ENCODE measurements at regions of chr1 and their contacts with region 1.

Region 1: DNA sequence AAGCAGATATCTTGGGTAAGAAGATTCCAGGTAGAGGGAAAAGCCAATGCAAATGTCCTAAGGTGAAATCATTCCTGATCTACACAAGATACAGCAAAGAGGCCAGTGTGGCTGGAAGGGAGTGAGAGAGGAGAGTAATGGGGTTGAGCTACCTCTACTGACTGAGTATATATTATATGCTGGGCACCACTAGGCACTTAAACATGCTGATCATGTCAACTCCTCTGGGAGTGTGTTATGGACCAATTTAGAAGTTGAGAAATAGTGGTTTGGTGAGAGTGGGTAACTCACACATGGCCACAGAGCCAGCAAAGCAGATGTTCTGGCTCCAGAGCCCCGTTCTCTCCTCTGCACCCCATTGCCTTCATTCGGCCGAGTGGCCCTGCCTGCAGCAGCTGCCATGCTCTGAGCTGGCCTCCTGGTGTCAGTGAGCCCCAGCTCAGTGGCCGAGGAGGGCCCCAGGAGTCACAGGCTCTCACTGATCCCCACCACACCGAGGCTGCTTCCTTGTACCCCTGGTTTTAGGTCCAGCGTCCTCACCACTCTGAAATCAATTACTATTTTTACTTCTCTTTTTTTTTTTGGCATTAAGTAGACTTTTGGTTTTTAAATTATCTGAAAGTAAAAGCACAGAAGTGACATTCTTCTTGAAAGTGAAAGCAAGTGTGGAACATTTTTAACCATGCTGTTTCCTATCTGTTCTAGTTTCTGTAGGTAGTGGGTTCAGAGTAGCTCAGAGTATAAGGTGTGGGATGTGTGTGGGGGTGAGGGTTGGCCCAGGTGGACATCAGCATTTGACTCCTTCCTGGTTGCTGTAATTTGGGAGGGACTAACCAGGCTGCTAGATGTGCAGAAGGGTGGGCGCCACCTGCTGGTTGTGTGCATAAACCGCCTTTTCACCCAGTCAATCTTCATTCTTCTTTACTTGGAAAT is 45.8 kb upstream of the CRNN start:
- DNase-seq: peak; percentile 29 to 88 (median 63)
- ATAC-seq: peak; percentile 53 to 76 (median 64)
- H3K4me3 ChIP-seq: peak overlapping the region in 1 of 2 donors; percentile 12
- H3K4me3 Mint-ChIP-seq: peak overlapping the region; percentile 43 to 74 (median 62)
- H3K27ac ChIP-seq: peak overlapping the region; percentile 70
- H3K27ac Mint-ChIP-seq: peak overlapping the region; percentile 83 to 94
- H3K4me1 ChIP-seq: peaks cover 4 to 14% of the 10 kb centered on the region in 2 experiments
- H3K4me1 Mint-ChIP-seq: peaks cover 26 to 28% (median 27%) of the 10 kb centered on the region in 3 donors
- H3K27me3 ChIP-seq: no peaks in the 10 kb centered on the region
- H3K27me3 Mint-ChIP-seq: peaks cover 0 to 4% of the 10 kb centered on the region in 2 donors

Region 2: GRCh38 chr1:152047730-152048402 is 412.0 kb before region 1 on chr1:
- CTCF ChIA-PET with region 1: interaction called, 5 to 18 read pairs
- POLR2A ChIA-PET with region 1: no interaction called
- DNase-seq: peak; percentile 66 to 90 (median 76)
- ATAC-seq: peak; percentile 92 to 96 (median 94)
- H3K4me3 ChIP-seq: peak overlapping the region; percentile 15 to 27
- H3K4me3 Mint-ChIP-seq: peak overlapping the region; percentile 67 to 77 (median 75)
- H3K27ac ChIP-seq: peak overlapping the region; percentile 98
- H3K27ac Mint-ChIP-seq: peak overlapping the region; percentile 99 to 100
- H3K4me1 ChIP-seq: peaks cover 14 to 26% of the 10 kb centered on the region in 2 experiments
- H3K4me1 Mint-ChIP-seq: peaks cover 29 to 40% (median 38%) of the 10 kb centered on the region in 3 donors
- H3K27me3 ChIP-seq: peaks cover 0 to 3% of the 10 kb centered on the region in 2 experiments
- H3K27me3 Mint-ChIP-seq: peaks cover 0 to 2% of the 10 kb centered on the region in 2 donors

Region 3: GRCh38 chr1:152347116-152347728 is 112.6 kb before region 1 on chr1:
- CTCF ChIA-PET with region 1: interaction called, 5 to 30 read pairs
- POLR2A ChIA-PET with region 1: no interaction called
- DNase-seq: peak in 23 of 35 experiments; percentile 4 to 79 (median 28)
- ATAC-seq: peak; percentile 39 to 64 (median 58)
- H3K4me3 ChIP-seq: no peak overlapping the region
- H3K4me3 Mint-ChIP-seq: no peak overlapping the region
- H3K27ac ChIP-seq: no peak overlapping the region
- H3K27ac Mint-ChIP-seq: no peak overlapping the region
- H3K4me1 ChIP-seq: no peaks in the 10 kb centered on the region
- H3K4me1 Mint-ChIP-seq: no peaks in the 10 kb centered on the region
- H3K27me3 ChIP-seq: peaks cover 0 to 4% of the 10 kb centered on the region in 2 experiments
- H3K27me3 Mint-ChIP-seq: peaks cover 13 to 34% of the 10 kb centered on the region in 2 donors

Region 4: DNA sequence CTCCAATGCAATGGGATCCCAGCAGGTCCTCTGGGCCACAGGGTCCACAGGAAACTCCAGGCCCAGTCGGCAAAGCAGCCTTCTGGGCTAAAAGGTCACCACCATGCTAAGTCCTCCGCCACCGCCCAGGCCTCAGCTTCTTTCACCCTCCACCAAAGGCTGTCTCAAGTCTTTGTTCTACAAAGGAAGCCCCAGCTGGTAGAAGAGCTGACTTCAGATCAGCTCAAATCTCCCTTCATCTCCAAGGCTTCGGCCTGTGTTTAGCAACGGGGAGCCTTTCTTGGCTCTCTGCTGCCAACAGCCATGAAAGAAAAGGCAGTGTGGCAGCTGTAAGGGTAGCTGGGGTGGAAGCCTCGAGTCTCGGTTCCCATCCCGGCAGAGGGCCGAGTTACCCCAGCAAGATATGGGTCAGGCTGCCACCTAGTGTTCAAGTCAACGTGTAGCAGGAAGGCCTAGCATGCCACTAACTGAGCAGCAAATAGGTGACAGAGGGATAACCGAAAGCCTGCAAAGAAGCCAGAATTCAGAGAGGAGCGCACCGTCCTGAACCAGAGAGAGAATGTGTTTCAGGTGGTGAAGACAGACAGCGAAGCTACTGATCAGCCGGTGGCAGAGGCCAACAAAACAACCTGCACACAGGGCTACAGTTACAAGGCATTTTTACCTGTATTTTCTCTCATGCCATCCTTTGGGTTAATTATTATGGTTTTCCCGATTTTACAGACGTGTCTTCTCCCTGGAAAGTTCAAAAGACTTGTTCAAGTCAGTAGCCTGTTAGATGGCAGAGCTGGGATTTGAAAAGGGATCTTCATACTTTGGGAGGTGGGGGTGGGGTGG is 19.0 kb before region 1 on chr1:
- CTCF ChIA-PET with region 1: interaction called, 7 to 41 read pairs
- POLR2A ChIA-PET with region 1: no interaction called
- DNase-seq: peak; percentile 26 to 83 (median 58)
- ATAC-seq: peak; percentile 90 to 96 (median 96)
- H3K4me3 ChIP-seq: no peak overlapping the region
- H3K4me3 Mint-ChIP-seq: no peak overlapping the region
- H3K27ac ChIP-seq: no peak overlapping the region
- H3K27ac Mint-ChIP-seq: peak overlapping the region in 1 of 2 donors; percentile 35
- H3K4me1 ChIP-seq: peaks cover 0 to 5% of the 10 kb centered on the region in 2 experiments
- H3K4me1 Mint-ChIP-seq: peaks cover 0 to 7% (median 7%) of the 10 kb centered on the region in 3 donors
- H3K27me3 ChIP-seq: peaks cover 0 to 6% of the 10 kb centered on the region in 2 experiments
- H3K27me3 Mint-ChIP-seq: peaks cover 34 to 36% of the 10 kb centered on the region in 2 donors

Region 5: DNA sequence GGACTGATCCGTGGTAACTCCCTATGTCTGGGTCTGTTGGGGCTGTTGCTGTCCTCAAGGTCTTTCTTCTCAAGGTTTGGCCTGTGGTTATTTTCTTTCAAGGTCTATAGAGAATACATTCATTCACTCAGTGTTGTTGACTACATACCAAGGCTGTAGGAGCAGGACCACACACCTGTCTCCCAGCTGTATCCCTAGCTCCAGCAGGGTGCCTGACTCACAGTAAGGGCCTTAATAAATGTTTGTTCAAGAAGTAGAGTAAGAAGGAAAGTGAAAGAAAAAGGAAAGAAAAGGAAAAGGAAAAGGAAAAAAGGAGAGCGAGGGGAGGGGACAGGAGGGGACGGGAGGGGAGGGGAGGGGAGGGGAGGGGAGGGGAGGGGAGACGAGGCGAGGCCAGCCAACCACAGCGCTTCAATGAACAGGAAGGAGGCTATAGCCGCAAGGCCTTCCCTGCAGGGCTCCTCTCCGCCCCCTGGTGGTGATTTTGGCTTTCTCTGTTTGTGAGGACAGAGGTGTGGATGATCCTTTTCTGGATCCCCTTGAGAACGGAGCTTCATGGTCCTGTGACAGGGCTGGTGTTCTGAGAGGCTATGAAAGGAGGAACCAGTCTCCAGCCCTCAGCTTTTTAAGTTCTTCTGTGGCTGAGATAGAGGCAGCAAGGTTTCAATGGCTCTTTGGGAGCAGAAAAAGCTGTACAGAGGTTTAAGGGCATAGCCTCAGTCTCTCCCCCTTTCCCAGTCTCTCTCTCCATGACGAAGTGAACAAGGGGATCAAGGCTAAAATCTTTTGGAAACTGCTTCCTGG is 20.1 kb after region 1 on chr1:
- CTCF ChIA-PET with region 1: interaction called, 3 to 15 read pairs
- POLR2A ChIA-PET with region 1: no interaction called
- DNase-seq: peak; percentile 5 to 72 (median 41)
- ATAC-seq: peak; percentile 54 to 77 (median 62)
- H3K4me3 ChIP-seq: no peak overlapping the region
- H3K4me3 Mint-ChIP-seq: no peak overlapping the region
- H3K27ac ChIP-seq: no peak overlapping the region
- H3K27ac Mint-ChIP-seq: peak overlapping the region in 1 of 2 donors; percentile 49
- H3K4me1 ChIP-seq: peaks cover 0 to 8% of the 10 kb centered on the region in 2 experiments
- H3K4me1 Mint-ChIP-seq: peaks cover 10 to 15% (median 14%) of the 10 kb centered on the region in 3 donors
- H3K27me3 ChIP-seq: no peaks in the 10 kb centered on the region
- H3K27me3 Mint-ChIP-seq: peaks cover 1 to 2% of the 10 kb centered on the region in 2 donors